Caco-2 (cell line): ENCODE measurements at regions of chr3 and their contacts with region 1.

Region 1: DNA sequence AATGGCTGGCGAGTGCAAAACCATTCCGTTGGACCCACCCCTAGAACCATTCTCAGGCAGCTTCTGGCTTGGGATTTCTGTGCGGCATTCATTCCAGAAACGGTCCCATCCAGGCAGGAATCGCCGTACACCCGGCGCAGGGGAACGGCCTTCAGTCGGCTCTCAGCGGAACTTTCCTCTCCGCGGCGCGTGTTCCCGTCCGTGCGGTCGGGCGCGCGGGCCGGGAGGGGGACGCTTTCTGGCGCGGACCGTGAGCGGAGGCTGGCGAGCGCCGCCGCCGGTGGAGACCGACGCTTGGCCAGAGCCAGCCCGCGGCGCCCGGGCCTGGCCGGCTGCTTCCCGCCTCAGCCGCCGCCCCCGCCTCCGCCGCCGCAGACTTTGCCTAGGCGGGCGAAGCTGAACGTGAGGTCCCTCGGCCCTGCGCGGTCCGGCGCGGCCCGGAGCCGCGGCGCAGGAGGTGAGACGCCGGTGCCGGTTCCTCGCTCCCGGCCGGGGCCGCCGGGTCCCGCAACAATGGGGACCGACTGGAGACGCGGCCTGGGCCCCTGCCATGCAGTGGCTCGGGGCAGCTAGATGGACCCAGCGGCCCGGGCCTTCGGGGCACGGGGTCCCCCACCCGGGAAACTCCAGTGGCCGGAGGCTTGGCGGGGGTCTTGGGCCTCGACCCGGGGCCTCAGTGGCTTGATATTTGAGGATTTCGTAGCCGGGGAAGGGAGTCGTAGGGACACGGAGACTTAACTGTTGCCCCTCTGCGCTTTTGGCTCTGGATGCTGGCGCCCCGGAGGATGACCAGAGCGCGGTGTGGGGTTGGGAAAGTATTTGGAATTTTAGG is at the start of gene RAD54L2:
- DNase-seq: peak; percentile 86 to 91
- H3K4me3 ChIP-seq: peak within 1 kb of the TSS; percentile 91
- H3K4me3 Mint-ChIP-seq: peak within 1 kb of the TSS; percentile 84
- H3K27ac Mint-ChIP-seq: peak within 1 kb of the TSS; percentile 82
- H3K4me1 ChIP-seq: peaks cover 9% of the 10 kb centered on the region
- H3K4me1 Mint-ChIP-seq: peaks cover 34% of the 10 kb centered on the region
- H3K27me3 ChIP-seq: no peaks in the 10 kb centered on the region
- H3K27me3 Mint-ChIP-seq: no peaks in the 10 kb centered on the region
- CTCF ChIP-seq: no peak
- total RNA-seq, gene RAD54L2: 34.0 and 36.5 TPM in 2 replicates

Region 2: GRCh38 chr3:51511000-51511399 is 27.7 kb before region 1 on chr3:
- CTCF ChIA-PET with region 1: interaction called, 4 read pairs
- POLR2A ChIA-PET with region 1: interaction called, 7 read pairs
- intact Hi-C with region 1: loop called (anchors 1 kb)
- DNase-seq: peak; percentile 74 to 84
- H3K4me3 ChIP-seq: no peak overlapping the region
- H3K4me3 Mint-ChIP-seq: no peak overlapping the region
- H3K27ac Mint-ChIP-seq: peak overlapping the region; percentile 76
- H3K4me1 ChIP-seq: peaks cover 23% of the 10 kb centered on the region
- H3K4me1 Mint-ChIP-seq: peaks cover 15% of the 10 kb centered on the region
- H3K27me3 ChIP-seq: no peaks in the 10 kb centered on the region
- H3K27me3 Mint-ChIP-seq: no peaks in the 10 kb centered on the region
- CTCF ChIP-seq: no peak

Region 3: GRCh38 chr3:51706788-51707731 is 168.4 kb after region 1 on chr3 and contains the start of gene GRM2:
- CTCF ChIA-PET with region 1: no interaction called
- POLR2A ChIA-PET with region 1: no interaction called
- intact Hi-C with region 1: no loop called
- DNase-seq: peak; percentile 88
- H3K4me3 ChIP-seq: peak within 1 kb of the TSS; percentile 45
- H3K4me3 Mint-ChIP-seq: peak within 1 kb of the TSS; percentile 70
- H3K27ac Mint-ChIP-seq: no peak within 1 kb of the TSS
- H3K4me1 ChIP-seq: no peaks in the 10 kb centered on the region
- H3K4me1 Mint-ChIP-seq: peaks cover 8% of the 10 kb centered on the region
- H3K27me3 ChIP-seq: peaks cover 2% of the 10 kb centered on the region; the same call in 1 of the 2 replicates
- H3K27me3 Mint-ChIP-seq: peaks cover 13% of the 10 kb centered on the region
- CTCF ChIP-seq: no peak
- total RNA-seq, gene GRM2: 0.14 TPM in 2 replicates